Vagina (tissue), 2 donors: ENCODE measurements at regions of chr6 and their contacts with region 1.

Region 1: DNA sequence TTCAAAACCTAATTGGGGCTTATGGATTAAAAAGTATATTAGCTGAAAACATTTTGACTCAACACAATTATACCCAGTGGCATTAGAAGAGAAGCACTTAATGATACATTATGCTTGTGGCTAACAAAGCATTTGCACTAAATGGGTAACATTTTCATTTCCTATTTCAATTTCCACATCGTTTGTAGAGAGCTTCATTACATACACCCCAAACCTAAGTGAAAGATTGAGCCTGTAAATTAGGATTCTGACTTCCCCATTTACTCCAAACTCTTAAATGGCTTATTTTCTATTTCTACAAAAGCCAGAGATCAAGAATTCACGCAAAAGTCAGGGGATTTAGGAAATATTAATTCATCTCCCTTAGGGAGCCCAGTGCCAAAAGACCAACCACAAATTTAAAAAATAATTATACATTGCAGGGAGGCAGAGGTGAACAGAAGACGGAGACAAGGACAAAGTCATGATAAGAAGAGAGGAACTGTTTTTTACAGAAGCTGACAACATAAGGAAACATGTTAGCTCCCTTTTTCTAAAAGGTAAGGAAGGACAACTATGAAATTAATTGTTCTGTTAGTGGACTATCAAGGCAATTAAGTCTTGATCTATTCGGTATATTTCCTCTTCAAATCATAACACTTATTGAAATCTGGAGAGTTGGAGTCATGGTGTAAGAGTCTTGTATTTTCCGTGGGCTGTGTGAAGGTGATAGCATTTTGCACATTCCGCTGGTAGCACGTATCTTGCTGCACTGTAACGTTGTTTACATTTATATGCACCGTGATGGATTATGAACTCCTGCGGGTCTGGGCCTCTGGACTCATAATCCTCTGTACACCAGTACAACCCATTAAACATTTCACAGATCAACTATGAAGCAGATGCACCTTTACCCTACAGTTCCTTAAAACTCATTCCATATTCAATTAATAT is 24.8 kb upstream of the EZR start:
- DNase-seq: no peak
- H3K4me3 ChIP-seq: no peak overlapping the region
- H3K27ac ChIP-seq: no peak overlapping the region
- H3K4me1 ChIP-seq: no peaks in the 10 kb centered on the region
- H3K27me3 ChIP-seq: no peaks in the 10 kb centered on the region
- CTCF ChIP-seq: no peak
- POLR2A ChIP-seq: no peak

Region 2: DNA sequence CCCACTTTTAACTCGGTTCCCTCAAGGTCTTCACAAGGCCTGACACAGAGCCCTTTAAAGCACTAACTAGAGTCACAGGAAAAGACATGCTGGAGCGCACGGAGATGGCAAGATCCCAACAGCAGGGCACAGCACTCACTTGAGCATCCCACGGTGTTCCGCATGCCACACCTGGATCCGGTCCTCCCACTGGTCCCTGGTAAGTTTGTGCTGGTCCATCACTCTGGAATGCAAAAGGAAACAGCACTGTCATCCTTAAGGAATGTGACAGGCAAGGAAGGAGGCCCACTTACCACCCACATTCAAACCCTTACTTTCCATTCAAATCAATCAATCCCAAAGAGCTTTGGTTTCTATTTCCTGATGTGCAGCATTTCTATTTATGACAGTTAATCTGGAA is 59.5 kb before region 1 on chr6:
- intact Hi-C with region 1: no loop called
- DNase-seq: no peak
- H3K4me3 ChIP-seq: no peak overlapping the region
- H3K27ac ChIP-seq: no peak overlapping the region
- H3K4me1 ChIP-seq: peaks cover 11% of the 10 kb centered on the region
- H3K27me3 ChIP-seq: no peaks in the 10 kb centered on the region
- CTCF ChIP-seq: no peak
- POLR2A ChIP-seq: no peak

Region 3: DNA sequence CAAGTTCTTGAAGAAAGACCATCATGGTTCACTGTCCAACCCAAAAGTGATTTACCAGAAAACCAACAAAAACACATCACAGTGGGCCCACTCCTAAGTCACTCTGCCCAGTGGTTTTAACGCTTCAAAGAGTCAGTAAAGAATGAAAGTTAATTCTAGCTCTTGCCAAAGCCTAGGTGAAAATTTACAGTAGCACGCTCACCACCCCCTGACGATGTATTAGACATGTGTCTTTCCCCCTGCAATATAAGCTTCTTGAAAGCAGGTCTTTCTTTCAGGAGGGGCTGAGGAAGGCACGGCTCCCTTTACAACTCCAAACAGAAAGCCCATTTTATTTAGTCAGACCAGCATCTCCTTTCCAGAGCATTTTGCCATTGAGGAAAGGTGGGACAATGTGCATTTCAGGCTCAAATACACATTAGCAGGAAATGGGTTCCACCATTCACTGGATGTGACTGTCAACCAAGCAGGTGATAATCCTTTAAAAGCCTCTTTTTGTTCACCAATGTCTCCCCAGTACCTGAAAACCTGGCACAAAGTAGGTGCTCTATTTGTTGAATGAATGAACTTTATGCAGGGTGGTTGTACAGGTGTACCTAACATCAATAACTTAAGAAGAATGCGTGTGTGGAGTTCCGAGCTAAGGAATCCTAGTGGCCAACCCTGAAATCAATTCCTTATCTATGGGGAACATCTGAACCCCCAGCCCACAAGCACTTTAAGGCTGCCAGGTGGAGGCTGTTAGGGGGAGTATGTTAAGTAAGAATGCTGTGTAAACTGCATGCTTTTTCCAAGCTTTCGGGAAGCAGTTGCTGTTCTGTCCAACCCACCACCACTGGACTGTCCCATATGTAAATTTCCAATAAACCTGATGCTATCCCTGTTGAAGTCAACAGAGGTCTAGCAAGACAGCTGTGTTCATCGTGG is 36.2 kb before region 1 on chr6:
- intact Hi-C with region 1: loop called (anchors 2 kb)
- DNase-seq: no peak
- H3K4me3 ChIP-seq: no peak overlapping the region
- H3K27ac ChIP-seq: no peak overlapping the region
- H3K4me1 ChIP-seq: peaks cover 23% of the 10 kb centered on the region
- H3K27me3 ChIP-seq: no peaks in the 10 kb centered on the region
- CTCF ChIP-seq: no peak
- POLR2A ChIP-seq: no peak

Region 4: GRCh38 chr6:159726918-159727716 is 883.1 kb after region 1 on chr6 and contains the start of gene WTAP:
- intact Hi-C with region 1: no loop called
- DNase-seq: peak in 1 of 2 donors; percentile 98
- H3K4me3 ChIP-seq: peak within 1 kb of the TSS; percentile 79
- H3K27ac ChIP-seq: peak within 1 kb of the TSS; percentile 97
- H3K4me1 ChIP-seq: peaks cover 46% of the 10 kb centered on the region
- H3K27me3 ChIP-seq: no peaks in the 10 kb centered on the region
- CTCF ChIP-seq: no peak
- POLR2A ChIP-seq: peak in 1 of 2 donors; percentile 90
- total RNA-seq, gene WTAP: 85.0 TPM